Activated CD4-positive, alpha-beta memory T cell treated with anti-CD3 and anti-CD28 coated beads, Interleukin-2, amount 10 ng/mL, durations not matched to agents 7 days and 5 days (primary cell): ENCODE measurements at regions of chr1 and their contacts with region 1.

Region 1: GRCh38 chr1:169893494-169894362 is at the start of gene SCYL3:
- DNase-seq: peak; percentile 90
- H3K4me3 Mint-ChIP-seq: peak within 1 kb of the TSS; percentile 73
- H3K27ac Mint-ChIP-seq: peak within 1 kb of the TSS; percentile 95
- H3K4me1 Mint-ChIP-seq: peaks cover 50% of the 10 kb centered on the region
- H3K27me3 Mint-ChIP-seq: peaks cover 8% of the 10 kb centered on the region
- total RNA-seq, gene SCYL3: 16.1 to 16.8 TPM

Region 2: GRCh38 chr1:169367486-169368405 is 526.0 kb before region 1 on chr1 and contains the starts of genes BLZF1 and NME7:
- CTCF ChIA-PET with region 1: interaction called, 4 read pairs
- POLR2A ChIA-PET with region 1: interaction called, 15 read pairs
- DNase-seq: peak; percentile 99
- H3K4me3 Mint-ChIP-seq: no peak within 1 kb of the TSS
- H3K27ac Mint-ChIP-seq: no peak within 1 kb of the TSS
- H3K4me1 Mint-ChIP-seq: peaks cover 39% of the 10 kb centered on the region
- H3K27me3 Mint-ChIP-seq: no peaks in the 10 kb centered on the region
- total RNA-seq, gene BLZF1: 48.1 to 49.3 TPM
- total RNA-seq, gene NME7: 26.1 to 28.3 TPM

Region 3: DNA sequence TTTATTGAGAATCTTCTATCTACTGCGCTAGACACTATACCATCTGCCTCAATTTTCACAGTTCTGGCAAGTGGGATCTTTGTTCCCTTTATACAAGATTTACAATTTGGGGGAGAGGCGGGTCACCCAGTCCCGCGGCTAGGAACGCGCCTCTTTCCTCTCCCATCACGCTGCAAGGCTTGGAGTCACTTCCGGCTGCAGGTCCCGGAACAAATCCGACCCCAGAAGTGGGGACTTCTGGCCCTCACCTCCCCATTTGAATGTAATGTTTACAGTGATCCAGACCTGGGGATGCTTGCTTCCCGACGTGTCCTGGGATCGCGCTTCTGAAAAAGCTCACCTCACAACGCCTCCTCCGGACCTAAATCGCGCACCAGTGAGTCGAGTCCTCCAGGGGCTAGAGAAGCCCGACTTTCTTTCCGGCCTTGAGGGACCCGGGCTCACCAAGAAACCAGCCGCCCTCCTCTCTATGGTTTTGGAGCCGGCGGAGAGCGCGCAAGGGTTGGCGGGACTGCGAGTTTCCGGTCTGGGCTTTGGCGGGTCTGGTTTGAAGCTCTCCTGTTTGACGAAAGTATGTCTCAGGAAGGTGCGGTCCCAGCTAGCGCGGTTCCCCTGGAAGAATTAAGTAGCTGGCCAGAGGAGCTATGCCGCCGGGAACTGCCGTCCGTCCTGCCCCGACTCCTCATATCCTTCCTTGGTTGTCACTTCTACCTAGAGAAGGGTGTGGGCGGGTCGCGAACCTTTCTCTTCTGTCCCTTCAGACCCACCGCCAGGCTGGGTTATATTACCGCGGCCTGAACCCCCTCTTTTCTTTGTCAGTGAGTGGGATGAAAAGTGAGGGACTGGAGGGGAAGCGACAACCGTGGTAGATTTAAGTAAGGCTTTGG is 99.0 kb before region 1 on chr1 and contains the start of gene METTL18:
- CTCF ChIA-PET with region 1: interaction called, 5 read pairs
- POLR2A ChIA-PET with region 1: interaction called, 106 read pairs
- DNase-seq: peak; percentile 95
- H3K4me3 Mint-ChIP-seq: peak within 1 kb of the TSS; percentile 84
- H3K27ac Mint-ChIP-seq: peak within 1 kb of the TSS; percentile 88
- H3K4me1 Mint-ChIP-seq: peaks cover 55% of the 10 kb centered on the region
- H3K27me3 Mint-ChIP-seq: no peaks in the 10 kb centered on the region
- total RNA-seq, gene METTL18: 14.2 to 15.7 TPM

Region 4: DNA sequence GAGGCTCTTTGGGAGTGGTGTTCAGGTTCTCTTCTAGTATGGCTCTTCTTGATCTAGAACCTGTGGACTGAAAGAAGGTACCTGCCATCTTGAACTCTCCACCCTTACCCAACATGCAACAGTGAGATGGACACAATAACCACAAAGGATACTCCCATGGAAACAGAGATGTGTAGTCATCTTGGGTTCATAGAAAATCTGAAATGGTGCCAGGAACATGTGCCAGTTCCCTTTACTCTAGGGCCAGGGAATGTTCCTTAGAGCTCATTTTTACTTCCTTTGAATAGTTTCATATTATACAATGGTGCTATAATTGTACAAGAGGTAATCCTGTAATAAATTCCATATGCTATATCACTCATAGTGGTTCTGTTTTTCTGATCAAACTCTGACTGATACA is 13.2 kb after region 1 on chr1:
- CTCF ChIA-PET with region 1: interaction called, 13 read pairs
- POLR2A ChIA-PET with region 1: interaction called, 124 read pairs
- DNase-seq: no peak
- H3K4me3 Mint-ChIP-seq: no peak overlapping the region
- H3K27ac Mint-ChIP-seq: no peak overlapping the region
- H3K4me1 Mint-ChIP-seq: peaks cover 45% of the 10 kb centered on the region
- H3K27me3 Mint-ChIP-seq: no peaks in the 10 kb centered on the region

Region 5: GRCh38 chr1:169925505-169926482 is 32.1 kb after region 1 on chr1:
- CTCF ChIA-PET with region 1: interaction called, 5 read pairs
- POLR2A ChIA-PET with region 1: interaction called, 22 read pairs
- DNase-seq: no peak
- H3K4me3 Mint-ChIP-seq: no peak overlapping the region
- H3K27ac Mint-ChIP-seq: peak overlapping the region; percentile 64
- H3K4me1 Mint-ChIP-seq: peaks cover 20% of the 10 kb centered on the region
- H3K27me3 Mint-ChIP-seq: no peaks in the 10 kb centered on the region

Region 6: DNA sequence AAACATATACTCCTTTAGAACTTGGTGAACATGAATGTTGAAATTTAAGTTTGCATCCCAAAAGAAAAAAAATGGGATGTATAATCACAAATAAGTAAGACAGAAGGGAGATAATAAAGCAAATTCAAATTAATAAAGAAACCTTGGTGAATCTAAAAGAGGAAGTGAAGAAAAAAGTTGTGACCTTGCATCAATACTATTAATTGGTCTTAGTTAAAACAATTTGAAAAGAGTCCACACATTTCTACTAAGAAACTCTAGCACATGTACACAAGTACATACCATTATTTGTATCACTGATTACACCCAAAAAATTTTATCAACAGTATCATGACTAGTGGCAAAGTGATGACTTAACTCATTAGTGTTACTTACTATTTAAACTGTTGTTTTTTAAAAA is 80.3 kb after region 1 on chr1:
- CTCF ChIA-PET with region 1: no interaction called
- POLR2A ChIA-PET with region 1: no interaction called
- DNase-seq: no peak
- H3K4me3 Mint-ChIP-seq: no peak overlapping the region
- H3K27ac Mint-ChIP-seq: no peak overlapping the region
- H3K4me1 Mint-ChIP-seq: no peaks in the 10 kb centered on the region
- H3K27me3 Mint-ChIP-seq: no peaks in the 10 kb centered on the region

Region 7: DNA sequence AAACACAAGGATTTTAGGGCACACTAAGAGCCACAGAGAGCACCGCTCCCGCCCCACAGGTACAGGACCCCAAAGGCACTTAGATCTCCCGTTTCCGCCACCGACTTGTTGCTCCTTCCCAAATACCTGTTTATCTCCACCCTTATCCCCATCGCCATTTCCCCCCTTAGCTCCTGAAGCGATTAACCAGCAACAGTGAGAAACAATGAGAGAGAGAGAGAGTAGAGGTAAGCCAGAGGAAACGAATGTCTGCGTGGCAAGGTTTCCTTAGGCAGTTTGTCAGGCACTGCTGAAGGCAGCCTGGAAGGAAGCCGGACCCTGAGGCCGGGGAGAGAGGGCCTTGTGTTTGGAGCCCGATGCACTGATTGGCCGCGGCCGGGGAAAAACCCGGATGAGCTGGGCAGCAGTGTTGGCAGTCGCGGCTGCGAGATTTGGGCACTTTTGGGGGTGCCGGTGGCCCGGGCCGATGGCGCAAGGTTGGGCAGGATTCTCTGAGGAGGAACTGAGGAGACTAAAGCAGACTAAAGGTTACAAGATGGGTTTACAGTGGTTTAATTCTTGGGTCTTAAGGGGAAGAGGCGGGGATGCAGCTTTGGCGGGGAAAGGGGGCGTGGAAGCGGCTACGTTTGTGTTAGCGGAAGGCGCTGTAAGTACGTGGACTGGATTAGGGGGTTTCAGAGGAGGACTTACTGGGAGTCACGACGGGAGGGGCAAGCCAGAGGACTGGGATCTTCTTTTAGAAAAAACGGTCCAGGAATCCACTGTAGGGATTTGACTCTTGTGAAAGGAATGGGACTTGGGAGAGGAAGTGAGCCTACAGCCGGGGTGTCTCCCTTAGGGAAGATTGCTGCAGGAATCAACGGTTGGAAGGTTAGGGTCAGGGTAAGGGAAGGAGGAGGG is 638.3 kb after region 1 on chr1 and contains the start of gene GORAB:
- CTCF ChIA-PET with region 1: no interaction called
- POLR2A ChIA-PET with region 1: interaction called, 20 read pairs
- DNase-seq: peak; percentile 91
- H3K4me3 Mint-ChIP-seq: no peak within 1 kb of the TSS
- H3K27ac Mint-ChIP-seq: no peak within 1 kb of the TSS
- H3K4me1 Mint-ChIP-seq: peaks cover 10% of the 10 kb centered on the region
- H3K27me3 Mint-ChIP-seq: peaks cover 9% of the 10 kb centered on the region
- total RNA-seq, gene GORAB: 8.9 to 10.8 TPM